ENCODE measurements at regions of chr12 and their contacts with region 1.

Region 1: GRCh38 chr12:53213348-53213747 is 6.3 kb upstream of the ITGB7 start:
- DNase-seq: no peak
- ATAC-seq: peak; percentile 89
- H3K4me3 ChIP-seq: no peak overlapping the region
- H3K27ac ChIP-seq: no peak overlapping the region; the same call in 1 of the 2 replicates
- H3K4me1 ChIP-seq: peaks cover 30% of the 10 kb centered on the region
- H3K27me3 ChIP-seq: no peaks in the 10 kb centered on the region
- CTCF ChIP-seq: peak; percentile 98

Region 2: GRCh38 chr12:53241623-53242412 is 28.5 kb after region 1 on chr12:
- CTCF ChIA-PET with region 1: interaction called, 13 read pairs
- POLR2A ChIA-PET with region 1: no interaction called
- in situ Hi-C with region 1: no loop called
- intact Hi-C with region 1: no loop called
- DNase-seq: no peak
- ATAC-seq: peak; percentile 32; the same call in 1 of the 2 replicates
- H3K4me3 ChIP-seq: no peak overlapping the region
- H3K27ac ChIP-seq: no peak overlapping the region
- H3K4me1 ChIP-seq: no peaks in the 10 kb centered on the region; the same call in 1 of the 2 replicates
- H3K27me3 ChIP-seq: no peaks in the 10 kb centered on the region; the same call in 1 of the 2 replicates
- CTCF ChIP-seq: no peak

Region 3: GRCh38 chr12:53287741-53288216 is 74.4 kb after region 1 on chr12:
- CTCF ChIA-PET with region 1: no interaction called
- POLR2A ChIA-PET with region 1: no interaction called
- in situ Hi-C with region 1: no loop called
- intact Hi-C with region 1: loop called (anchors 1 kb)
- DNase-seq: peak; percentile 63
- ATAC-seq: peak; percentile 86
- H3K4me3 ChIP-seq: no peak overlapping the region
- H3K27ac ChIP-seq: no peak overlapping the region
- H3K4me1 ChIP-seq: no peaks in the 10 kb centered on the region
- H3K27me3 ChIP-seq: no peaks in the 10 kb centered on the region
- CTCF ChIP-seq: peak; percentile 87; the same call in 1 of the 2 replicates

Region 4: DNA sequence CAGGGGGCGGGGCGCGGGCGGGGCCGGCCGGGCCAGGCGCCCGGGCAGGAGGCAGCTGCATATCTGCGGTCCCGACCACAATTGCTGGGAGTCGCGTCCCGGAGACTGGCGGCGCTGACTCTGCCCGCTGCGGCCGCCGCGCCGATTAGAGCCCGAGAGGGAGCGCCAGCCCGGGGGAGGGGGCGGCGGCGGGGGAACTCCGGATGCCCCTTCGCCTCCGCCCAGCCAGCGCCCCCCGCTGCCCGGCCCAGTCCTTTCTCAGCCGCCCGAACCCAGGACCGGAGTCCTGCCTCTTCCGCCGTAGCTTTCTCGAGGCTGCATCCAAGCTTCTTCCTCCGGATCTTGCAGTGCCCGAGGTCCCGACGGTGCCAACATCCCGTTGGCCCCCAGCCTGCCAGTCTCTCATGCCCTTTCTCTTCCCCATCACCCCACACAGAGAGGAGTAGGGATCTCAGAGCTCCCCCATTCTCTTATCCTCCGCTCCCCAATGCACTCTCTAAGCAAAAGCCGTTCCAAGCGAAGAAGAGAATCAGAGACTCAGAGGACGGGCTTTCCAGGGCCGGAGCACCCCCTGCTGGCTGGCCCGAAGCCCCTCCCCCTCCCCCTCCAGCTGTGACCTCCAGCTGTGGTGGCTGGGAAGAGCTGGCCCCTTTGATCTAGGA is 131.6 kb after region 1 on chr12:
- CTCF ChIA-PET with region 1: interaction called, 10 read pairs
- POLR2A ChIA-PET with region 1: interaction called, 3 read pairs
- in situ Hi-C with region 1: no loop called
- intact Hi-C with region 1: no loop called
- DNase-seq: no peak
- ATAC-seq: peak; percentile 90
- H3K4me3 ChIP-seq: peak overlapping the region; percentile 60 to 86
- H3K27ac ChIP-seq: peak overlapping the region; percentile 64
- H3K4me1 ChIP-seq: peaks cover 10% of the 10 kb centered on the region; the same call in 1 of the 2 replicates
- H3K27me3 ChIP-seq: no peaks in the 10 kb centered on the region
- CTCF ChIP-seq: peak; percentile 91